ENCODE measurements at regions of chr10 and their contacts with region 1.

Region 1: DNA sequence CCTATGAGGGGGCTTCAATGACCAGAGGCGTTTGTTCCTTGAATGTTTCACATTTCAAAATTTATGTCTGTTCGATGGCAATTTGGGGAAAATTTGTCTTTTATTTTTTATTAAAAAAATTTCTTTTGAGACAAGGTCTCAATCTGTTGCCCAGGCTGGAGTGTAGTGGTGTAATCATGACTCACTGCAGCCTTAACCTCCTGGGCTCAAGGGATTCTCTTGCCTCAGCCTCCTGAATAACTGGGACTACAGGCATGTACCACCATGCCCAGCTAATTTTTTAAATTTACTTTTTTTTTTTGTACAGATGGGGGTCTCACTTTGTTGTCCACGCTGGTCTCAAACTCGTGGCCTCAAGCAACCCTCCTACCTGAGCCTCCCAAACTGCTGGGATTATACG is 39.7 kb downstream of the OTUD1 start:
- DNase-seq: no peak
- H3K4me3 Mint-ChIP-seq: no peak overlapping the region
- H3K27ac Mint-ChIP-seq: no peak overlapping the region
- H3K4me1 Mint-ChIP-seq: no peaks in the 10 kb centered on the region
- H3K27me3 Mint-ChIP-seq: peaks cover 9% of the 10 kb centered on the region
- CTCF ChIP-seq: no peak

Region 2: GRCh38 chr10:23461557-23461956 is 17.0 kb before region 1 on chr10:
- CTCF ChIA-PET with region 1: interaction called, 10 read pairs
- intact Hi-C with region 1: no loop called
- DNase-seq: no peak
- H3K4me3 Mint-ChIP-seq: no peak overlapping the region
- H3K27ac Mint-ChIP-seq: no peak overlapping the region
- H3K4me1 Mint-ChIP-seq: peaks cover 16% of the 10 kb centered on the region
- H3K27me3 Mint-ChIP-seq: no peaks in the 10 kb centered on the region
- CTCF ChIP-seq: no peak